Calu3 (cell line): ENCODE measurements at regions of chr1 and their contacts with region 1.

Region 1: GRCh38 chr1:246971090-246971721 is 36.7 kb downstream of the ZNF695 start:
- DNase-seq: no peak
- H3K4me3 Mint-ChIP-seq: no peak overlapping the region
- H3K27ac Mint-ChIP-seq: no peak overlapping the region
- H3K4me1 Mint-ChIP-seq: no peaks in the 10 kb centered on the region
- H3K27me3 Mint-ChIP-seq: no peaks in the 10 kb centered on the region
- CTCF ChIP-seq: no peak

Region 2: DNA sequence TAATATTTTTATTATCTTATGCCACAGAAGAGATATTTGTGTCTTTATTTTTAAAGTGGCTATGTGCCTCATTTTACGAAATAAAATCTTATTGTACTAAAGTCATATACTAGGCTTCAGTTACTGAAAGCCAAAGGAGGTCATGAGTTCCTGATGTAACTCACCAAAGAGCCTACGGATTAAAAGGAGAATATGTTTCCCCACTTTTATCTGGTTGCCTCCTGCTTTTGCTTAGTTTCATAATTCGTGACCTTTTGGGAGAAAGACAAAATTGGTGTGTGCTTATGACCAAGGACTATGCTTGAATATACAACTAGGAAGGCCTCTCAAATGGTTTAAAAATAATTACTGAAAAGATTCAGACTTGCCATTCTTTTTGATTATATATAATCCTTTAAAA is 21.2 kb before region 1 on chr1:
- CTCF ChIA-PET with region 1: interaction called, 11 read pairs
- intact Hi-C with region 1: no loop called
- DNase-seq: no peak
- H3K4me3 Mint-ChIP-seq: no peak overlapping the region
- H3K27ac Mint-ChIP-seq: no peak overlapping the region
- H3K4me1 Mint-ChIP-seq: no peaks in the 10 kb centered on the region
- H3K27me3 Mint-ChIP-seq: no peaks in the 10 kb centered on the region
- CTCF ChIP-seq: no peak

Region 3: GRCh38 chr1:247111700-247112478 is 140.7 kb after region 1 on chr1:
- CTCF ChIA-PET with region 1: no interaction called
- intact Hi-C with region 1: no loop called
- DNase-seq: peak; percentile 67
- H3K4me3 Mint-ChIP-seq: peak overlapping the region; percentile 76
- H3K27ac Mint-ChIP-seq: no peak overlapping the region
- H3K4me1 Mint-ChIP-seq: peaks cover 8% of the 10 kb centered on the region
- H3K27me3 Mint-ChIP-seq: peaks cover 14% of the 10 kb centered on the region
- CTCF ChIP-seq: no peak